SK-N-SH (cell line): ENCODE measurements at regions of chr20 and their contacts with region 1.

Region 1: GRCh38 chr20:39081255-39081654 is 119.1 kb downstream of the DHX35 start:
- DNase-seq: peak; percentile 85
- H3K4me3 ChIP-seq: no peak overlapping the region; a peak in 1 of 4 replicates
- H3K27ac ChIP-seq: no peak overlapping the region
- H3K4me1 ChIP-seq: no peaks in the 10 kb centered on the region
- H3K27me3 ChIP-seq: peaks cover 11% of the 10 kb centered on the region; the same call in 1 of the 2 replicates
- CTCF ChIP-seq: peak; percentile 88
- EP300 ChIP-seq: no peak
- RAD21 ChIP-seq: peak; percentile 73

Region 2: GRCh38 chr20:38969708-38970107 is 111.5 kb before region 1 on chr20:
- CTCF ChIA-PET with region 1: no interaction called
- POLR2A ChIA-PET with region 1: no interaction called
- DNase-seq: no peak
- H3K4me3 ChIP-seq: no peak overlapping the region; a peak in 1 of 4 replicates
- H3K27ac ChIP-seq: peak overlapping the region in 1 of 2 experiments; percentile 90; a peak in 2 of 4 replicates
- H3K4me1 ChIP-seq: peaks cover 0 to 24% of the 10 kb centered on the region in 2 experiments; a peak in 1 of 4 replicates
- H3K27me3 ChIP-seq: no peaks in the 10 kb centered on the region
- CTCF ChIP-seq: no peak
- EP300 ChIP-seq: no peak
- RAD21 ChIP-seq: no peak

Region 3: GRCh38 chr20:39070484-39071231 is 10.6 kb before region 1 on chr20:
- CTCF ChIA-PET with region 1: interaction called, 103 read pairs
- POLR2A ChIA-PET with region 1: no interaction called
- DNase-seq: no peak
- H3K4me3 ChIP-seq: no peak overlapping the region
- H3K27ac ChIP-seq: no peak overlapping the region
- H3K4me1 ChIP-seq: no peaks in the 10 kb centered on the region; a peak in 2 of 4 replicates
- H3K27me3 ChIP-seq: no peaks in the 10 kb centered on the region; the same call in 1 of the 2 replicates
- CTCF ChIP-seq: no peak
- EP300 ChIP-seq: no peak
- RAD21 ChIP-seq: no peak

Region 4: GRCh38 chr20:39381596-39381995 is 300.3 kb after region 1 on chr20:
- CTCF ChIA-PET with region 1: no interaction called
- POLR2A ChIA-PET with region 1: no interaction called
- DNase-seq: no peak
- H3K4me3 ChIP-seq: no peak overlapping the region
- H3K27ac ChIP-seq: no peak overlapping the region
- H3K4me1 ChIP-seq: no peaks in the 10 kb centered on the region
- H3K27me3 ChIP-seq: no peaks in the 10 kb centered on the region
- CTCF ChIP-seq: no peak
- EP300 ChIP-seq: no peak
- RAD21 ChIP-seq: no peak